ENCODE measurements at regions of chr20 and their contacts with region 1.

Region 1: DNA sequence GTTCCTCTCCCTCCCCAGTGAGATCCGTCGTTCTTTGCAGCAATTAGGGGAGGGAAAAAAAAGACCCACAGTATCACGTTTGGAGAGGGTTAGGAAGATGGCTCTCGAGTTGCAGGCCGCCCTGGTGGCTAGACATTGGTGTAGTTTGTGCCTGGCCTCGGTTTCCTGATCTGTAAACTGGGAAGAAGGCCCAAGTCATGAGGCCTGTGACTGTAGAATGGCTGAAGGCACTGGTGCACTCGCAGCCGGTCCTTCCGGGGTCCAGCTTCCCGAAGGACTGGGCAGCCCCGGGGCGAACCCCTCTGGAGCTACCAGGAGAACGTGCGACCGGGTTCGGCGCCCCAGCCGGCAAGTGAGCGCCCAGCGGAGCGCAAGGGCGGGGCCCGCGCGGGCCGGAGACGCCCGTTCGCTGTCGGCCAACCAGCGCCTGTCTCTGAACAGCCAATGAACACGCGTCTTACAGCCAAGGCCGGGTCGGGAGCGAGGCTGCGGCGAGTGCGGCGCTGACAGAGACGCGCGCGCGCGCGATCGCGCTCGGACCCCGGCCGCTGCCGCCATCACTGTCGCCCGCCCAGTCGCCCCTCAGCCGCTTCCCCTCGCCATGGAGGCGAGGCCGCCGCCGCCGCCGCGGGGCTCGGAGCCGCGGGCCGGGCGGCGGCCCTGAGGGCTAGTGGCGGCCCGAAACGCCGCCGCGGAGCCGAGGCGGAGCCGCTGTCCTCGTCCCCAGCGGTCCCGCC is at the start of gene PTPRA:
- DNase-seq: peak; percentile 95
- H3K4me3 Mint-ChIP-seq: peak within 1 kb of the TSS; percentile 90
- H3K27ac Mint-ChIP-seq: peak within 1 kb of the TSS; percentile 91
- H3K4me1 Mint-ChIP-seq: peaks cover 43% of the 10 kb centered on the region
- H3K27me3 Mint-ChIP-seq: no peaks in the 10 kb centered on the region
- total RNA-seq, gene PTPRA: 61.1 to 62.8 TPM

Region 2: DNA sequence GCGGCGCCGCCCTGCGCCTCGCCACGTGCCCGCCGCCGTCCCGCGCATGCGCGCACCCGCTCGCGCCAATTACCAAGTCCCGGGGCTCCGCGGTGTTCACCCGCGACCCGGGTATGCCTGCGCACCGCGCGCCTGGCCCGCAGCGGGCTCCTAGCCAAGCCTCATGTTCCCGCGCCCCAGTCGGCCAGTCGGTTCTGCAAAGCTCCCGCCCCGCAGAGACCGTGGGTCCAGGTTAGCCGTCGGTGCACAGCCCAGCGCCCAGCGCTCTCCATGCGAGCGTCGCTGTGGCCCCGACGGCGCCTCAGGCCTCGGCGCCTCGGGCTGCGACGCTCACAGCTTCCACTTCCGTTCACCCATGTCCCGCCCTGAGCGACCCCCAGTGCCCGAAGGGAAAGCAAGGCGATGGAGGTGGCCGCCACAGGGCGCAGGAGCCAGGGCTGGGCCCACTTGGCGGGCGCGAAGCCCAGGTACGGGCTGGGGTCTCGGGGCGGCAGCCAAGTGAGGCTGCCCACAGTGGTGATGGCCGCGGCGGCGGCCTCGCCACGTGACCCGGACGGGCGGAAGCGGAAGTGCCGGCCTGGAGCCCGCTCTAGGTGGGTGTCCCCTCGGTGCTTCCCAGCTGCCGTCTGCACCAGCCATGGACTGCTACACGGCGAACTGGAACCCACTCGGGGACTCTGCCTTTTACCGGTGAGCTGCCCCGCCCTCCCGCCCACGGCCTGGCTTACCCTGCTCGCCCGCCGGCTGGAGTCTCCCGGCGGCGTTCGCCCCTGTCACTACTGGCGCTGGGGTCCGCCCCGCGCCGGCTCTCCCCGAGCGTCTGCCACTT is 32.8 kb before region 1 on chr20 and contains the starts of genes PCED1A and VPS16:
- CTCF ChIA-PET with region 1: no interaction called
- POLR2A ChIA-PET with region 1: interaction called, 4 read pairs
- intact Hi-C with region 1: loop called (anchors 1 kb)
- DNase-seq: peak; percentile 92
- H3K4me3 Mint-ChIP-seq: peak within 1 kb of the TSS; percentile 84
- H3K27ac Mint-ChIP-seq: peak within 1 kb of the TSS; percentile 85
- H3K4me1 Mint-ChIP-seq: peaks cover 36% of the 10 kb centered on the region
- H3K27me3 Mint-ChIP-seq: no peaks in the 10 kb centered on the region
- total RNA-seq, gene PCED1A: 37.0 to 40.0 TPM
- total RNA-seq, gene VPS16: 51.2 to 53.0 TPM

Region 3: GRCh38 chr20:3000852-3001523 is 127.8 kb after region 1 on chr20:
- CTCF ChIA-PET with region 1: interaction called, 7 read pairs
- POLR2A ChIA-PET with region 1: no interaction called
- intact Hi-C with region 1: loop called (anchors 1 kb)
- DNase-seq: no peak
- H3K4me3 Mint-ChIP-seq: no peak overlapping the region
- H3K27ac Mint-ChIP-seq: peak overlapping the region; percentile 51
- H3K4me1 Mint-ChIP-seq: peaks cover 9% of the 10 kb centered on the region
- H3K27me3 Mint-ChIP-seq: no peaks in the 10 kb centered on the region